Activated CD4-positive, alpha-beta T cell treated with anti-CD3 and anti-CD28 coated beads, Interleukin-2, amount 10 ng/mL, durations not matched to agents 7 days and 5 days (primary cell): ENCODE measurements at regions of chr3 and their contacts with region 1.

Region 1: DNA sequence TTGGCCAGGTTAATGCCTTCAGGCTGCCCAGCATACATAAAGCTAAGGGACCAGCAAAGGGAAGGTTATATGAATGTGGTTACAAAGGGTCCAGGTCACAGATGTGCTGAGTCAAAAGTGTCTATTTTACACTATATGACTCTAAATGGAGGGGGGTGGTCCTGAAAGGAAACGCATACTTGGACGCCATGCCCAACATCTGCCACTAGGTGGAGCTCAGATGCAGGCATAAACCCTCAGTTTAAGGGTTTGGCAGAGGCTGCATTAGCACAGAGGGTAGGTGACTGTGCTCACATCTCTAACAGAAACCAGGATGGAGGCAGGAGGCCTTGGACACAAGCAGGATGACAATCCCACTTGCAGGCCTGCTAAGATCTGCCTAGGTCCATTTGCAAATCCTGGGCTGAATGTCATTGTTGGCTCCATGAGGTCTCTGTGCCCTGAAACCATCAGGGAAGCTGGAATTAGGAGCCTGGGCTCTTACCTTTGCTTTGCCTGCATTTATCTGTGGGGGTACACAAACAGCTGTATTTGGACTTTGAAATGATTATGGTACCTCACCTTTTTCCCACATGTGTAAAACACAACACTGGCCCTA is 55.8 kb downstream of the ZNF621 start:
- DNase-seq: peak; percentile 73
- H3K4me3 Mint-ChIP-seq: no peak overlapping the region
- H3K27ac Mint-ChIP-seq: no peak overlapping the region
- H3K4me1 Mint-ChIP-seq: no peaks in the 10 kb centered on the region
- H3K27me3 Mint-ChIP-seq: peaks cover 10% of the 10 kb centered on the region

Region 2: GRCh38 chr3:39990532-39990931 is 590.1 kb before region 1 on chr3:
- CTCF ChIA-PET with region 1: no interaction called
- POLR2A ChIA-PET with region 1: interaction called, 12 read pairs
- DNase-seq: peak; percentile 37
- H3K4me3 Mint-ChIP-seq: no peak overlapping the region
- H3K27ac Mint-ChIP-seq: no peak overlapping the region
- H3K4me1 Mint-ChIP-seq: no peaks in the 10 kb centered on the region
- H3K27me3 Mint-ChIP-seq: no peaks in the 10 kb centered on the region